Dorsolateral prefrontal cortex (tissue), 120 donors: ENCODE measurements at regions of chr1 and their contacts with region 1.

Region 1: GRCh38 chr1:115138968-115139367 is 49.7 kb upstream of the TSPAN2 start:
- DNase-seq: peak; percentile 38 to 82 (median 74)
- H3K4me3 ChIP-seq: peak overlapping the region in 1 of 59 donors; percentile 7
- H3K27ac ChIP-seq: no peak overlapping the region
- H3K27me3 ChIP-seq: peaks cover 0 to 26% (median 4%) of the 10 kb centered on the region in 45 donors
- CTCF ChIP-seq: peak; percentile 73 to 96 (median 87)

Region 2: DNA sequence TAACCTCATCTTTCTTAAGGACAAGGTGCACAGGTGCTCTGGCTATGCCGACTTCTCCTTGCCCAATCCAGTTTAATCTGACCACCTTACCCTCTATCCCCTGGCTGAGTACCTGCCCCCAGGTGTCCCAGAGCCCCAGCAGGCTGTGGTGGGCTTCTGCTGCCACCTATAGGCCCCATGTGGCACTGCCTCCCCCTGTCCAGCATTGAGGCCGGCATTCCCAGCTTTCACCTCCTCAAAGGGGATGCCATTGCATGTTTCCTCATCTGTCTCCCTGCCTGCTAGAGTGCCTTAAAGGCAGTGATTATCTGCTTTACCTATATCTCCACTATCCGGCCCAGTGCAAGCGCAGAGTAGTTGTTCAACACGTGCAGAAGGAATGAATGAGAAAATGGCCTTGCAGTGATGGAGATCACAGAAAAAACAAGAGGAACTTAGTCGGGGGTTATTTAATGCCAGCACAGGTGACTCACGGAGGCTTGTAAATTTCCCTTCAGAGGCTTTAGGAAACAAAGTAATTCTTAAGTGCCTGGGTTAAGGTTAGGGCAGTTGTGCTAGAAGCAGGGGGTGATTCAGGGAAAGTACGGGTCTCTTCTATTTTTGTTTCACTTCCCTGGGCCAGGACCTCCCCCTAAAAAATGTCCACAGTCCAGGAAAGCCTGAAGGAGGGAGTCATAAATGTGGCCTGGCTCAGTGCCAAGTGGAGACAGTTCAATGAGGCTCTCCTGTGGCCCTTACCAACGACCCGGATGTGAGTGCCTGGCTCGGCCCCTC is 330.9 kb after region 1 on chr1:
- intact Hi-C with region 1: loop called (anchors 2 to 10 kb)
- DNase-seq: peak in 4 of 10 donors; percentile 20 to 50 (median 43)
- H3K4me3 ChIP-seq: no peak overlapping the region
- H3K27ac ChIP-seq: no peak overlapping the region
- H3K27me3 ChIP-seq: peaks cover 0 to 6% (median 0%) of the 10 kb centered on the region in 45 donors
- CTCF ChIP-seq: peak in 55 of 56 donors; percentile 17 to 81 (median 70)

Region 3: GRCh38 chr1:115595279-115596079 is 456.5 kb after region 1 on chr1:
- intact Hi-C with region 1: loop called (anchors 2 to 5 kb)
- DNase-seq: peak; percentile 74 to 93 (median 86)
- H3K4me3 ChIP-seq: no peak overlapping the region
- H3K27ac ChIP-seq: peak overlapping the region in 1 of 59 donors; percentile 27
- H3K27me3 ChIP-seq: peaks cover 0 to 1% (median 0%) of the 10 kb centered on the region in 45 donors
- CTCF ChIP-seq: peak; percentile 63 to 95 (median 90)

Region 4: DNA sequence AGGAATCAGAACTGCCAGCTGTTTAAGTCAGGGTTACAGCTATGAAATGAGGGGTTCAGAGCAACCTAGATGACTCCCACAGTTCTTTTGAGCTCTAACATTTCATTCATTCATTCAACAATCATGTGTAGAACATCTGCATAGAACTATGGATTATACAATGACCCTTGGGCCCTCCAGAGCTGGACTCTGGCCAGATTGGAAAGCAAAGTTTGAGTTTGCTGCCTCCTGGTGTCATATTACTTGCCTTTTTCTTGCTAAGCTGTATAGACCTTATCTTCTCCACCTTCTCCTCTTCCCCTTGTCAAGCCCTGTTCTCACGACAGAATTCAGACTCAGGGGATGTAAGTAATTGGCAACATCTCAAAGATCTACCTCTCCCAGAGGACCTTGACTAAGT is 625.6 kb after region 1 on chr1:
- intact Hi-C with region 1: loop called in 1 of 2 experiments (anchors 10 kb)
- DNase-seq: no peak
- H3K4me3 ChIP-seq: no peak overlapping the region
- H3K27ac ChIP-seq: no peak overlapping the region
- H3K27me3 ChIP-seq: no peaks in the 10 kb centered on the region
- CTCF ChIP-seq: peak in 4 of 56 donors; percentile 13 to 36 (median 22)